ENCODE measurements at regions of chr19 and their contacts with region 1.

Region 1: GRCh38 chr19:14487370-14488125 is 8.4 kb downstream of the GIPC1 start:
- DNase-seq: no peak
- ATAC-seq: no peak
- H3K4me3 ChIP-seq: no peak overlapping the region
- H3K4me3 Mint-ChIP-seq: no peak overlapping the region
- H3K27ac ChIP-seq: no peak overlapping the region
- H3K27ac Mint-ChIP-seq: no peak overlapping the region
- H3K4me1 ChIP-seq: peaks cover 5% of the 10 kb centered on the region
- H3K4me1 Mint-ChIP-seq: peaks cover 6 to 12% of the 10 kb centered on the region in 2 donors
- H3K27me3 ChIP-seq: no peaks in the 10 kb centered on the region
- H3K27me3 Mint-ChIP-seq: no peaks in the 10 kb centered on the region
- CTCF ChIP-seq: no peak

Region 2: GRCh38 chr19:14198384-14199376 is 288.9 kb before region 1 on chr19:
- intact Hi-C with region 1: loop called (anchors 2 kb)
- DNase-seq: no peak
- ATAC-seq: no peak
- H3K4me3 ChIP-seq: no peak overlapping the region
- H3K4me3 Mint-ChIP-seq: no peak overlapping the region
- H3K27ac ChIP-seq: no peak overlapping the region
- H3K27ac Mint-ChIP-seq: peak overlapping the region in 1 of 2 donors; percentile 33
- H3K4me1 ChIP-seq: peaks cover 26% of the 10 kb centered on the region
- H3K4me1 Mint-ChIP-seq: peaks cover 21 to 65% of the 10 kb centered on the region in 2 donors
- H3K27me3 ChIP-seq: no peaks in the 10 kb centered on the region
- H3K27me3 Mint-ChIP-seq: no peaks in the 10 kb centered on the region
- CTCF ChIP-seq: no peak

Measured in natural killer cell (primary cell).